Panc1 (cell line): ENCODE measurements at regions of chr10 and their contacts with region 1.

Region 1: GRCh38 chr10:110304780-110305421 is at the start of gene SMNDC1:
- DNase-seq: peak; percentile 91
- ATAC-seq: peak; percentile 97
- H3K4me3 ChIP-seq: peak within 1 kb of the TSS; percentile 97 to 98
- H3K27ac ChIP-seq: peak within 1 kb of the TSS; percentile 96
- H3K4me1 ChIP-seq: peaks cover 22% of the 10 kb centered on the region
- H3K27me3 ChIP-seq: no peaks in the 10 kb centered on the region
- CTCF ChIP-seq: no peak
- total RNA-seq, gene SMNDC1: 62.2 TPM

Region 2: DNA sequence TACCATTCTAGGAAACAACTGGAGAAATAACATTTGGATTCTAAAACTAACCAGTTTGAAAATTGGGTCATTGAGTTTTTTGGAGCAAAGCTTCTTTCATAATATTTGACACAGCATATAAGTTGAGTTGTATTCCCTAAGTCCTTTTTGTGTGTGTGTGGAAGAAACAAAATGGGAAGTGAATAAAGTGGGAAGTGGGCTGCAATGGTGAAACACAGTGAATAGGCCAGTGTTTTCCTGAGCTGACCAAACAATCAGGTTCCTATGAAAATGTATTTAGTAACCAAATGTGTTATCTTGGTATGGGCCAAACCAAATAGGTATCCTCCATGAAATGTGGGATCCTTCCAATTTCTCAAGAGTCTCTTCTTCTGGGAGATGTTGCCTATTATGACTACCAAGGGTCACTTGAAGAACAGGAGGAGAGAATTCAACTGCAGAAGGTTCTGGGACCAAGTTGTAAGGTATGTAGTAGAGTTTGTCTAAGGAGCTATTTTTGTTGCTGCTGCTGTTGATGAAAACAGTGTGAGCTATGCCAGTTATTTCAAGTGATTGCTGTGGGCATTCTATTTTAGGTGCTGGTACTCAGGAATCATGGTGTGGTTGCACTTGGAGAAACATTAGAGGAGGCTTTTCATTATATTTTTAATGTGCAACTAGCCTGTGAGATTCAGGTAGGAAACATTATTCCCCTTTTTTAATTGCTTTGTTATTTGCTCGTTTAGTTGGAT is 185.8 kb before region 1 on chr10:
- CTCF ChIA-PET with region 1: no interaction called
- POLR2A ChIA-PET with region 1: no interaction called
- in situ Hi-C with region 1: no loop called
- intact Hi-C with region 1: no loop called
- DNase-seq: no peak
- ATAC-seq: no peak
- H3K4me3 ChIP-seq: no peak overlapping the region
- H3K27ac ChIP-seq: no peak overlapping the region
- H3K4me1 ChIP-seq: no peaks in the 10 kb centered on the region
- H3K27me3 ChIP-seq: no peaks in the 10 kb centered on the region
- CTCF ChIP-seq: no peak

Region 3: DNA sequence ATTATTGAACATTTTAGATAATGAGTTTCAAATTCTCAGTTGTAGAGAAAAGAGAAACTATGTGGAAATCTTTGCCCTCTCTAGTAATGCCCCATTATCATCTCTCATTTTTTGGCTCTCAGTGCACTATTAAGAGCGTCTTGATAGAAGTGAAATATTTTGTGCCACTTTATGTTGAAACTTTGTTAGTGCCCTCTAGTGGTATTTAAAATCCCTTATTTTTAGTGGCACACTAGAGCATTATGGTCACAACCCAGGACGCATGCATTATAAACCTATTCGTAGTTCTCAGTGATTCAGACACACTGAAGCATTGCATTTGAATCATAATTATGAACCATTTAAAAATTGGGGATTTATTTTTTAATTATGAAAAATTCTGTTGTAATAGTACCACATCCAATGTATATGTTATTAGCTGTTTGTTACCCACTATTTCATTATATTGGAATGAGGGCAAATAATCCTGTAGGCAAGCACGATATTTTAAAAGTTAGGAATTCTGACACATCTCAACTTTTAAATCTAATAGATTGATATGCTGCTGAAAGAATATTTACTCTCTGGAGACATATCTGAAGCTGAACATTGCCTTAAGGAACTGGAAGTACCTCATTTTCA is 588.8 kb after region 1 on chr10:
- CTCF ChIA-PET with region 1: no interaction called
- POLR2A ChIA-PET with region 1: no interaction called
- in situ Hi-C with region 1: no loop called
- intact Hi-C with region 1: loop called (anchors 5 kb)
- DNase-seq: no peak
- ATAC-seq: peak; percentile 94
- H3K4me3 ChIP-seq: no peak overlapping the region
- H3K27ac ChIP-seq: no peak overlapping the region
- H3K4me1 ChIP-seq: no peaks in the 10 kb centered on the region; the same call in 1 of the 2 replicates
- H3K27me3 ChIP-seq: no peaks in the 10 kb centered on the region
- CTCF ChIP-seq: peak; percentile 72; the same call in 1 of the 2 replicates